ENCODE measurements at regions of chr22 and their contacts with region 1.

Region 1: DNA sequence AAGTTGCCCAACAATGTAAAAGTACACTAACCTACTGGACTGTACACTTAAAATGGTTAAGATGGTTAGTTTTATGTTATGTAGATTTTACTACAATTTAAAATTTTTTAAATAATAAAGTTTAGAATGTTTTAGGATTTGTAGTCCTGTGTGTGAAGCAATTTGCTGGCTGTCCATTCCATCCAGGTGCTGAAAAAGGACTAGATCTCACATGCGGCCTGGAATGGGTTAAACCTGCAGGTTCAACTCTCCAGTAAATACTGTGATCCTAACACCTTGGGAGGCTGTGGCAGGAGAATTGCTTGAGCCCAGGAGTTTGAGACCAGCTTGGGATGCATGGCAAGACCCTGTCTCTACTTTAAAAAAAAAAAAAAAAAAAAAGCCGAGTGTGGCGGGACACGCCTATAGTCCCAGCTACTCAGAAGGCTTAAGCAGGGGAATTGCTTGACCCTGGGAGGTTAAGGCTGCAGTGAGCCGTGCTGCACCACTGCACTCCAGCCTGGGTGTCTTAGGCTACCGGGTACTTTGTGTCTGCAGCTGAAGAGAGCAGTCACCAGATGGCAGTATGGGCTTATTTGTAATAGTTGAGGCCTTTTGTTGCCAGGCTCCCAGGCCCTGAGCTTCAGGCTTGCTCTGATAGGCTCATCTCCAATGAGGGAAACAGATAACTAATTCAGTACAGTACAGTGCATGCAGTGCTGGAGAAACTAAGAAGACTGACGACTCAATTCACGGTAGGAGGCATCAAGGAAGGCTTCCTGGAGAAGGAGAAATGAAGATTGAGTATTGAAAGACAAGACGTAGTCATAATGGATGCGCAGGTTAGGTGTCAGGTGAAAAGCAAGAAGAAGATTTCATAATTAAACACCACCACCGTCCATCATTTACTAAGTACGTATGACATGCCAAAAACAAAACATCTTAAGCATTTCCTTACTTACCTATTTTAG is 64.7 kb upstream of the ASPHD2 start:
- DNase-seq: peak; percentile 64
- H3K4me3 ChIP-seq: no peak overlapping the region
- H3K27ac ChIP-seq: no peak overlapping the region
- H3K4me1 ChIP-seq: peaks cover 7% of the 10 kb centered on the region
- H3K27me3 ChIP-seq: no peaks in the 10 kb centered on the region
- CTCF ChIP-seq: peak; percentile 62 to 79

Region 2: GRCh38 chr22:26428515-26429457 is 64.4 kb after region 1 on chr22 and contains the start of gene ASPHD2:
- CTCF ChIA-PET with region 1: no interaction called
- dilution Hi-C with region 1: no loop called
- in situ Hi-C with region 1: no loop called
- intact Hi-C with region 1: loop called (anchors 2 kb)
- DNase-seq: peak; percentile 64
- H3K4me3 ChIP-seq: peak within 1 kb of the TSS; percentile 47 to 69 (median 65)
- H3K27ac ChIP-seq: peak within 1 kb of the TSS; percentile 11
- H3K4me1 ChIP-seq: peaks cover 7% of the 10 kb centered on the region
- H3K27me3 ChIP-seq: no peaks in the 10 kb centered on the region
- CTCF ChIP-seq: no peak
- total RNA-seq, gene ASPHD2: 6.1 to 16.5 TPM

Region 3: DNA sequence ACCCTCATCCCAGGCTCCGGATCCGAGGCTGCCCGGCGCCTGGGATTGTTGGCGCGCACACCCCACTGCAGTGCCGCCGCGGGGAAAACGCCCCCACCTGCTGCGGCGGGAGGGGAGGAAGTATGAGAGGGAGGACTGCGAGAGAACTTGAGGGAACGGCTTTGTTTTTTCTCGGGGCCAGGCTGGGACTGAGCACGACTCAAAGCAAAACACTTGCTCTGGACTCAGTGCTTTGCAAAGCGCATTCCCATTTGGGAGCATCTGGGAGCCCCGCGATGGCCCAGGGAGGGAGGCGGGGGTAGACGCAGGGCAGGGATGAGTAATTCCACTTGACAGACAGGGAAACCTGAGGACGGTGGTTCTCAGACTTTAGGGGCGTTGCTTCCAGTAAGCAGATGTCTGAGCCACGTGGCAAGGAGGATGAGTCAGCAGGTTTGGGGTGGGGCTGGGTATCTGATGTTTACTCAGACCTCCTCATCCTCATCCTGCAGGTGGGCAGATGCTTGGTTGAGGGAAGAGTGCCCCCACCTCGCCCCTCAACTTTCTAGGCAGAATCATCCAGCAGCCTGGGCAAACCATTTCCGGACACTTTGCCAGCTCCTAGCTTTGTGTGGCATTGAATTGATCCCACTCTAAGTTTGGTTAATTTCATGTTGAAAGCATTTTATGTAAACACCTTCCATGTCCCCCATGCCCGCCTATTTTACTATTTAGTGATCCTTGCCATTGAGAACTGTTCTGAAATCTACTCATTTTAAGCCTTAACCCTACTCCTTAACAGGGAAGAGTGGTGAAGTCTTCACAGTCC is 294.5 kb after region 1 on chr22:
- CTCF ChIA-PET with region 1: no interaction called
- dilution Hi-C with region 1: no loop called
- in situ Hi-C with region 1: no loop called
- intact Hi-C with region 1: no loop called
- DNase-seq: peak; percentile 92
- H3K4me3 ChIP-seq: peak overlapping the region in 2 of 3 experiments; percentile 24 to 29
- H3K27ac ChIP-seq: no peak overlapping the region
- H3K4me1 ChIP-seq: peaks cover 19% of the 10 kb centered on the region
- H3K27me3 ChIP-seq: peaks cover 9% of the 10 kb centered on the region
- CTCF ChIP-seq: no peak